ENCODE measurements at regions of chr14 and their contacts with region 1.

Region 1: GRCh38 chr14:105527661-105528581 is 1.5 kb downstream of the TMEM121 start:
- DNase-seq: peak; percentile 87 to 94
- ATAC-seq: peak; percentile 89
- H3K4me3 ChIP-seq: peak overlapping the region; percentile 11 to 49
- H3K27ac ChIP-seq: no peak overlapping the region
- H3K4me1 ChIP-seq: no peaks in the 10 kb centered on the region
- H3K27me3 ChIP-seq: no peaks in the 10 kb centered on the region

Region 2: GRCh38 chr14:105203057-105203531 is 324.8 kb before region 1 on chr14:
- intact Hi-C with region 1: loop called (anchors 10 kb)
- DNase-seq: peak; percentile 82 to 94
- ATAC-seq: peak; percentile 69
- H3K4me3 ChIP-seq: no peak overlapping the region
- H3K27ac ChIP-seq: no peak overlapping the region
- H3K4me1 ChIP-seq: no peaks in the 10 kb centered on the region
- H3K27me3 ChIP-seq: no peaks in the 10 kb centered on the region

Region 3: DNA sequence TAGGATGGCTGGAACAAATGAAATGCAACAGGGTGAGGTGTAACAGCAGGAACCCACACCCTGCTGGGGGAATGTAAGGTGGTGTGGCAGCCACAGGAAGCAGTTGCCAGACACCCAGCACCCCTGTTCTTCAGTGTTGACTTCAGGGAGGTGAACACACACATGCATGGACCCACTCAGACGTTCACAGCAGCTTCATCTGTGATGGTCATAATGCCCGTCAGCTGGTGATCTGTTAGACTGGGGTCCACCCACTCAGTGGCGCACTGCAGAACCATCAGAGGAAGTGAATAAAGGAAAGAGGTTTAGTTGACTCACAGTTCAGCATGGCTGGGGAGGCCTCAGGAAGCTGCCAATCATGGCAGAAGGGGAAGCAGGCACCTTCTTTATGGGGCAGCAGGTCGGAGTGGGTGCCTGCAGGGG is 152.3 kb before region 1 on chr14:
- intact Hi-C with region 1: loop called (anchors 1 to 5 kb)
- DNase-seq: no peak
- ATAC-seq: no peak
- H3K4me3 ChIP-seq: no peak overlapping the region
- H3K27ac ChIP-seq: no peak overlapping the region
- H3K4me1 ChIP-seq: no peaks in the 10 kb centered on the region
- H3K27me3 ChIP-seq: no peaks in the 10 kb centered on the region

Region 4: GRCh38 chr14:105430535-105430934 is 97.4 kb before region 1 on chr14:
- intact Hi-C with region 1: no loop called
- DNase-seq: no peak
- ATAC-seq: no peak
- H3K4me3 ChIP-seq: no peak overlapping the region
- H3K27ac ChIP-seq: peak overlapping the region in 1 of 2 donors; percentile 49
- H3K4me1 ChIP-seq: no peaks in the 10 kb centered on the region
- H3K27me3 ChIP-seq: no peaks in the 10 kb centered on the region

Region 5: GRCh38 chr14:105448706-105449111 is 79.2 kb before region 1 on chr14:
- intact Hi-C with region 1: loop called in 1 of 2 experiments (anchors 5 kb)
- DNase-seq: peak; percentile 76 to 94
- ATAC-seq: peak; percentile 88
- H3K4me3 ChIP-seq: no peak overlapping the region
- H3K27ac ChIP-seq: no peak overlapping the region
- H3K4me1 ChIP-seq: no peaks in the 10 kb centered on the region
- H3K27me3 ChIP-seq: no peaks in the 10 kb centered on the region